Prostate gland (tissue), 2 donors: ENCODE measurements at regions of chr10 and their contacts with region 1.

Region 1: GRCh38 chr10:93926613-93927012 is 32.8 kb downstream of the SLC35G1 start:
- DNase-seq: no peak
- H3K4me3 ChIP-seq: no peak overlapping the region
- H3K27ac ChIP-seq: no peak overlapping the region
- H3K4me1 ChIP-seq: no peaks in the 10 kb centered on the region
- H3K27me3 ChIP-seq: no peaks in the 10 kb centered on the region
- CTCF ChIP-seq: no peak
- POLR2A ChIP-seq: no peak

Region 2: DNA sequence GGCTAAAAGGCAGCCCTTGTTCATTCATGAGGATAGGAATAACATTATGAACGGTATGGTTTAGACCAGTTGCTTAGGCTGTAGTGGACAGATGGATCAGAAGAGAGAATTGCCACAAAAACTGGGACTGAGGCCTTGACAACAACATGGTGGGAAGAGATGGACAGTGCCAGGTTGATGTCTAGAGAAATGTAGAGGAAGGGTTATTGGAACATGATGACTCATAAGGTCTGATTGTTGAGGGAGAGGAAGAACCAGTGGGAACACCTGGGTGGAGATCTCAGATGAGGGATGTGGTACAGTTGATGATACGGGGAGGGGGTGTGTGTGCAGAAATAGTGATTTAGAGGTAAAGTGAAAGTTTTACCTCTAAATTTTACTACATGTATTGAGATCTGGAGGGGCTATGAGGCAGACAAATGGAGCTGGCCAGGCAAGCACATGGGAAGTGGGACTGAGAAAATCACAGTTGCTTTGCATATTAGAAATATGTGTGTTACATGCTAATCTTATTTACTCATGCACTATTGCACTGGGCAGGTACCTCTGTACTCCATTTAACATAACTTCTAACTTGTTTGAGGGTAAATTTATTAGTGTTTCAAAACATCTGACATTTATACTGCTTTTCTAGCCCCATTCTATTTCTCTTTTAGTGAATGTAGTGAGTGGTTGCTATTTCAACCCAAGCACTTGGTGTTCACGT is 132.7 kb after region 1 on chr10:
- intact Hi-C with region 1: loop called (anchors 5 kb)
- DNase-seq: no peak
- H3K4me3 ChIP-seq: no peak overlapping the region
- H3K27ac ChIP-seq: no peak overlapping the region
- H3K4me1 ChIP-seq: no peaks in the 10 kb centered on the region
- H3K27me3 ChIP-seq: no peaks in the 10 kb centered on the region
- CTCF ChIP-seq: no peak
- POLR2A ChIP-seq: no peak

Region 3: DNA sequence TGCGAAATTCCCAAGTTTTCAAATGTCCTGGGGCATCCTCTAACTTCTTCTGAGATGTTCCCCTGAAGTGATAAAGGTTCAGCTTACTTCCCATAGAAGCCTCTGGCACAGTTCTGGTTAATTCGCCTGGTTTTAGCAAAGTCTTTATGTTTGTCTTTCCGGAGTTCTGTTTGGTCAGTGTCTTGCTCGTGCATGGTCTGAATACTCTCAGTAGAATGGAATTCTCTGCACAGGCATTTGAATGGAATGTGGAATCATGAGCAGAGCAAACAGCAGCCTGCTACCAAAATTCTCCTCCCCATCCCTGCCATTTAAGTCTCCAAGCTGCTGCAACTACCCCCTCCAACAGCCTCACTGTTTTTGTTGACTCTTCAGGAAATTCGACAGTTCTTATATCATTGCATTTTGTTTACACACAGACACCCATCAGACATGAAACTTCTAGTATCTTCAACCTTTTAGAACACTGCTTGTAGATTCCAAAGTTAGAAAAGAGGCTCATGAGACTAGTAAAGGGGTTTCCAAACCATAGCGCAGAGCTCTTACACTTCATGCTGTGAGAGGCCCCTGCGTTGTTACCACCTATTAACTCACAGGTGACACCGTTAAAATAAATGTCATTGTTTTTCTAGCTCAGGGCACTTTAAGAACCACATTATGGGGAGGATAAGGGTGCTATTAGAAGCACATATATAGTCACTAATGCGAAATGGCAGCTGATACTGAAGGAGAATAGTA is 196.8 kb after region 1 on chr10:
- intact Hi-C with region 1: no loop called
- DNase-seq: no peak
- H3K4me3 ChIP-seq: no peak overlapping the region
- H3K27ac ChIP-seq: no peak overlapping the region
- H3K4me1 ChIP-seq: no peaks in the 10 kb centered on the region
- H3K27me3 ChIP-seq: no peaks in the 10 kb centered on the region
- CTCF ChIP-seq: no peak
- POLR2A ChIP-seq: no peak